ENCODE measurements at regions of chr14 and their contacts with region 1.

Region 1: GRCh38 chr14:65412032-65412846 is at the start of gene FUT8:
- DNase-seq: peak; percentile 92 to 97
- H3K4me3 ChIP-seq: peak within 1 kb of the TSS; percentile 87
- H3K4me1 ChIP-seq: peaks cover 24% of the 10 kb centered on the region
- H3K27me3 ChIP-seq: no peaks in the 10 kb centered on the region

Region 2: DNA sequence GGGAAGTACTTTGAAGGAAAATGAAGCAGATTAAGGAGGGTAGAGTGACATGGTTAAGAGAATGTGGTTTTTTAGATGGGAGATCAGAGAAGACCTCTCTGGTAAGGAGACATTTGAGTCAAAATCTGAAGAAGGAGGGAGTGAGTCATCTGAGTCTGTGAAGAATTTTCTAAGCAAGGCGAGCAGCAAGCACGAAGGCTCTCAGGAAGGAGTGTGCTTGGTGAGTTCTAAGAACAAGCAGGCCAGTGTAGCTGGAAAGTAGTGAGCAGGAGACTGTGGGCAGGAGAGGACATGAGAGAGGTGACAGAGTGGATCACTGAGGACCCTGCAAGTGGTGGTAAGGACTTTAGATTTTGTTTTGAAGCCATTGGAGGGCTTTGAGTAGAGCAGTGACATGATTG is 76.0 kb before region 1 on chr14:
- in situ Hi-C with region 1: no loop called
- DNase-seq: no peak
- H3K4me3 ChIP-seq: no peak overlapping the region
- H3K4me1 ChIP-seq: peaks cover 34% of the 10 kb centered on the region
- H3K27me3 ChIP-seq: no peaks in the 10 kb centered on the region

Region 3: DNA sequence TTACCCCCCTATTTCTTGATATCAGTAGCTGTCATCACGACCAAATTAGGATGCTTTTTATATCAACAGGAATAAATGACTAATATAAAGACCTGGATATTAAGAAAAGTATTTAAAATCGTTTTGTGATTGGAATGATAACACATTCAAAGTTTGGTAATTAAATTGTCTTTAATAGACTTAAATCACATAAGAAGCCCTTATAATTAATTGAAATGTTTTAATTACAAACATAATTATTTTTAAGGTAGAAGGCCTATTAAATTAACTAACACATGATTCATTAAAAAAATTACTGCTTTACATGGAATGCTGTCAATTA is 412.7 kb after region 1 on chr14:
- in situ Hi-C with region 1: loop called (anchors 5 kb)
- DNase-seq: no peak
- H3K4me3 ChIP-seq: no peak overlapping the region
- H3K4me1 ChIP-seq: peaks cover 4% of the 10 kb centered on the region
- H3K27me3 ChIP-seq: peaks cover 8% of the 10 kb centered on the region; the same call in 1 of the 2 replicates

Region 4: GRCh38 chr14:65958664-65959562 is 546.7 kb after region 1 on chr14:
- in situ Hi-C with region 1: loop called (anchors 10 kb)
- DNase-seq: peak in 1 of 2 experiments; percentile 35
- H3K4me3 ChIP-seq: no peak overlapping the region
- H3K4me1 ChIP-seq: no peaks in the 10 kb centered on the region
- H3K27me3 ChIP-seq: 0 out of 2 replicates have a peak, but pooled peaks cover 6% of the 10 kb centered on the region

Region 5: DNA sequence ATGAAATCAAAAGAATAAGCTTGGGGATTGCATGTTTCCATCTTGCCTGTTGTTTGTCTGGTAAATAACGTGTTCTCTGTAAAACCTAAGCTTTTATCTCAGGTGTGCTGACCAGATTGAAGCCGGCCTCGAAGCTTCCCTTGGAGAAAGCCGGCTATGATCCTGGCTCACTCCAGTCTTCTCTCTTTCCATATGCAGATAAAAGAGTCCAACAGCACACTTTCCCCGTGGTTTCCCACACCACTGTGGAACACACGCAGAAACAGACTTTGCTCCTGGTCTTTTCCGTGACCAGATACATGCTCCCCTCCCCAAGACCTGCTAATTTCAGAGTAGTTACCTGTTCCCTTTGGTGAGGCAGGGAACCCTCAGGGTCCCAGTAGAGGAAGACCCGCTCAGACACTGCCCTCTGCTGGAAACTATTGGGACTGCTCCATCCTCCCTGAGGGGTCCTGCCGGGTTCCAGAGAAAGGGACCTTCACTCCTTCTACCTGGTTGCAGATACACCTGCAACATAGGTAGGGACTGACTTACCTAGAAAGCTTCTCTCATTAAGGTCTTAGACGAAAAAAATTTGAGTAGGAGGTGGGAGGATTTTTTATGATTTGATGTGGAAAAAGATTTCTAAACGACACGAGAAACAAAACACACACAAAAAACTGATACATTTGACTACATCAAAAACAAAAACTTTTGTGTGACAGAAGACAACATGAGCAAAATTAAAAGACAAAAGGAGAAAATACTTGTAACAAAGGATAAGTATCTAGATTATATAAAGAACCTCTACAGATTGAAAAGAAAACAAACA is 658.5 kb after region 1 on chr14:
- in situ Hi-C with region 1: loop called (anchors 10 kb)
- DNase-seq: peak; percentile 49 to 85
- H3K4me3 ChIP-seq: no peak overlapping the region
- H3K4me1 ChIP-seq: peaks cover 5% of the 10 kb centered on the region; the same call in 1 of the 2 replicates
- H3K27me3 ChIP-seq: peaks cover 4% of the 10 kb centered on the region; the same call in 1 of the 2 replicates